ENCODE measurements at regions of chr14 and their contacts with region 1.

Region 1: GRCh38 chr14:53539489-53540126 is 386.5 kb upstream of the DDHD1 start:
- DNase-seq: peak; percentile 51 to 80 (median 64)
- ATAC-seq: peak; percentile 79 to 93 (median 91)
- H3K4me3 ChIP-seq: no peak overlapping the region
- H3K27ac ChIP-seq: no peak overlapping the region
- H3K4me1 ChIP-seq: no peaks in the 10 kb centered on the region
- H3K27me3 ChIP-seq: no peaks in the 10 kb centered on the region
- CTCF ChIP-seq: peak; percentile 65 to 74 (median 70)

Region 2: DNA sequence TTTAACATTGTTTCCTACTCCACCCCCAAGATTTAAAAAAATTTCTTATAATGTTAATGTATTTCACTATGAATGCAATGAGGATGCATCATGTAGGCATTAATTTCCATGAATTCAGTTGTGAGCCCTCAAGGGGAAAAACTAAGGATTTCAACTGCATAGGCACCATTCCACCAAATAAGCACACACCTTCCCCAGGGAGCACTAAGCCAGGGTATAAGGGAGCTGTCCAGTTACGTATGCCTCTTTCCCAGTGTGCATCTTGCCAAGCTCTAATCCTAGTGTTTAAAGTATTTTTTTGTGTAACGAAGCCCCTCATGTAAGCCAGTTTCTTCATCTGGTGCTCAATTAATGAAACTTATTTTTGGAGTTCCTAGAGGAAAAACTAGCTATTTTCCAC is 595.4 kb before region 1 on chr14:
- intact Hi-C with region 1: no loop called
- DNase-seq: no peak
- ATAC-seq: no peak
- H3K4me3 ChIP-seq: no peak overlapping the region
- H3K27ac ChIP-seq: no peak overlapping the region
- H3K4me1 ChIP-seq: peaks cover 0 to 7% (median 3%) of the 10 kb centered on the region in 3 donors
- H3K27me3 ChIP-seq: no peaks in the 10 kb centered on the region
- CTCF ChIP-seq: no peak

Region 3: GRCh38 chr14:54169254-54169924 is 629.8 kb after region 1 on chr14:
- intact Hi-C with region 1: loop called in 2 of 3 experiments (anchors 5 to 10 kb)
- DNase-seq: no peak
- ATAC-seq: peak in 2 of 4 donors; percentile 28 to 56
- H3K4me3 ChIP-seq: no peak overlapping the region
- H3K27ac ChIP-seq: no peak overlapping the region
- H3K4me1 ChIP-seq: no peaks in the 10 kb centered on the region
- H3K27me3 ChIP-seq: no peaks in the 10 kb centered on the region
- CTCF ChIP-seq: no peak